ENCODE measurements at regions of chr14 and their contacts with region 1.

Region 1: GRCh38 chr14:91796617-91797347 is 64.9 kb upstream of the CATSPERB start:
- DNase-seq: no peak
- H3K4me3 ChIP-seq: no peak overlapping the region
- H3K4me3 Mint-ChIP-seq: no peak overlapping the region
- H3K27ac ChIP-seq: no peak overlapping the region
- H3K27ac Mint-ChIP-seq: peak overlapping the region; percentile 8 to 89 (median 48)
- H3K4me1 ChIP-seq: peaks cover 9% of the 10 kb centered on the region
- H3K4me1 Mint-ChIP-seq: peaks cover 13 to 36% (median 23%) of the 10 kb centered on the region in 4 donors
- H3K27me3 ChIP-seq: no peaks in the 10 kb centered on the region
- H3K27me3 Mint-ChIP-seq: no peaks in the 10 kb centered on the region

Region 2: GRCh38 chr14:91554535-91555332 is 242.0 kb before region 1 on chr14:
- CTCF ChIA-PET with region 1: no interaction called
- POLR2A ChIA-PET with region 1: no interaction called
- intact Hi-C with region 1: no loop called
- DNase-seq: no peak
- H3K4me3 ChIP-seq: no peak overlapping the region
- H3K4me3 Mint-ChIP-seq: no peak overlapping the region
- H3K27ac ChIP-seq: no peak overlapping the region
- H3K27ac Mint-ChIP-seq: no peak overlapping the region
- H3K4me1 ChIP-seq: no peaks in the 10 kb centered on the region
- H3K4me1 Mint-ChIP-seq: no peaks in the 10 kb centered on the region
- H3K27me3 ChIP-seq: no peaks in the 10 kb centered on the region
- H3K27me3 Mint-ChIP-seq: no peaks in the 10 kb centered on the region

Region 3: GRCh38 chr14:91830777-91831176 is 34.0 kb after region 1 on chr14:
- CTCF ChIA-PET with region 1: interaction called, 3 read pairs
- POLR2A ChIA-PET with region 1: interaction called, 3 read pairs
- intact Hi-C with region 1: loop called (anchors 5 kb)
- DNase-seq: peak in 1 of 5 donors; percentile 33
- H3K4me3 ChIP-seq: no peak overlapping the region
- H3K4me3 Mint-ChIP-seq: peak overlapping the region in 4 of 8 donors; percentile 18 to 72 (median 46)
- H3K27ac ChIP-seq: no peak overlapping the region
- H3K27ac Mint-ChIP-seq: peak overlapping the region in 3 of 7 donors; percentile 48 to 89 (median 69)
- H3K4me1 ChIP-seq: peaks cover 67% of the 10 kb centered on the region
- H3K4me1 Mint-ChIP-seq: peaks cover 58 to 76% (median 69%) of the 10 kb centered on the region in 4 donors
- H3K27me3 ChIP-seq: no peaks in the 10 kb centered on the region
- H3K27me3 Mint-ChIP-seq: no peaks in the 10 kb centered on the region

Region 4: GRCh38 chr14:92382677-92383076 is 585.9 kb after region 1 on chr14:
- CTCF ChIA-PET with region 1: no interaction called
- POLR2A ChIA-PET with region 1: no interaction called
- intact Hi-C with region 1: no loop called
- DNase-seq: no peak
- H3K4me3 ChIP-seq: no peak overlapping the region
- H3K4me3 Mint-ChIP-seq: no peak overlapping the region
- H3K27ac ChIP-seq: no peak overlapping the region
- H3K27ac Mint-ChIP-seq: no peak overlapping the region
- H3K4me1 ChIP-seq: no peaks in the 10 kb centered on the region
- H3K4me1 Mint-ChIP-seq: no peaks in the 10 kb centered on the region
- H3K27me3 ChIP-seq: no peaks in the 10 kb centered on the region
- H3K27me3 Mint-ChIP-seq: no peaks in the 10 kb centered on the region